ENCODE measurements at regions of chr5 and their contacts with region 1.

Region 1: DNA sequence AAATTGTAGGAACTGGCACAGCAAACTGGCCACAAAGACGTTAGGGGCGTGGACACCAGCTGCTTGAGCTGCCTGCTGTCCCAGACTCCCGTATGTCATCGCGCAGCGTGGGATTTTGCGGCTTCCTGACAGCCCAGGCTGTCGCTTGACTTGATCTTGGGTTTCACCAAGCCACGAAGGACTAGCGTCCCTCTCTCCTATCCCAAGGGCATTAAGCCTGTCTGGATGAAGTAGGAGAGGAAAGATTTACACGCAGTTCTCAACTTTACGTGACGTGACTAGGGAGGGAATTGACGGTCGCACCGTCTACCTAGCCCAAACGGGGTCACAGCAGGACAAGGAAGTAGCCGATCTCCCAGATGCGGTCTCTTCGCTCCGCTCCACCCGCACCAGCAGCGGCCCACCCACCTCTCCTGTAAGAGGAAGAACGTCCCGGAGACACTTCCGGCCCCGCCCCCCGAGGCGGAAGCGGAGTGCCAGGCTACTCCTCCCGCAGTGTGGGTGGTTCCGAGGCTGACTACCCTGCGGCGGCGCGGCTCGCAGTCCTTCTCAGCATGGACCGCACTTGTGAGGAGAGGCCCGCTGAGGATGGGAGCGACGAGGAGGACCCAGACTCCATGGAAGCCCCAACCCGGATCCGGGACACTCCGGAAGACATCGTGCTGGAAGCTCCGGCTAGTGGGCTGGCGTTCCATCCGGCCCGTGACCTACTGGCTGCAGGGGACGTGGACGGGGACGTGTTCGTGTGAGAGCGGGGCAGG is at the start of gene WDR55:
- DNase-seq: peak; percentile 94 to 96
- ATAC-seq: peak; percentile 95
- H3K4me3 ChIP-seq: peak within 1 kb of the TSS; percentile 79 to 90 (median 82)
- H3K27ac ChIP-seq: peak within 1 kb of the TSS; percentile 92 to 98 (median 98)
- H3K4me1 ChIP-seq: peaks cover 16 to 20% of the 10 kb centered on the region in 2 donors
- H3K27me3 ChIP-seq: no peaks in the 10 kb centered on the region
- CTCF ChIP-seq: no peak
- POLR2A ChIP-seq: peak; percentile 76 to 84
- total RNA-seq, gene WDR55: 10.9 to 18.7 (median 15.1) TPM

Region 2: GRCh38 chr5:139611703-139612584 is 1052.6 kb before region 1 on chr5:
- in situ Hi-C with region 1: no loop called
- intact Hi-C with region 1: no loop called
- DNase-seq: no peak
- ATAC-seq: no peak
- H3K4me3 ChIP-seq: no peak overlapping the region
- H3K27ac ChIP-seq: peak overlapping the region in 2 of 4 donors; percentile 18 to 20
- H3K4me1 ChIP-seq: peaks cover 19 to 20% of the 10 kb centered on the region in 2 donors
- H3K27me3 ChIP-seq: no peaks in the 10 kb centered on the region
- CTCF ChIP-seq: no peak
- POLR2A ChIP-seq: no peak

Region 3: DNA sequence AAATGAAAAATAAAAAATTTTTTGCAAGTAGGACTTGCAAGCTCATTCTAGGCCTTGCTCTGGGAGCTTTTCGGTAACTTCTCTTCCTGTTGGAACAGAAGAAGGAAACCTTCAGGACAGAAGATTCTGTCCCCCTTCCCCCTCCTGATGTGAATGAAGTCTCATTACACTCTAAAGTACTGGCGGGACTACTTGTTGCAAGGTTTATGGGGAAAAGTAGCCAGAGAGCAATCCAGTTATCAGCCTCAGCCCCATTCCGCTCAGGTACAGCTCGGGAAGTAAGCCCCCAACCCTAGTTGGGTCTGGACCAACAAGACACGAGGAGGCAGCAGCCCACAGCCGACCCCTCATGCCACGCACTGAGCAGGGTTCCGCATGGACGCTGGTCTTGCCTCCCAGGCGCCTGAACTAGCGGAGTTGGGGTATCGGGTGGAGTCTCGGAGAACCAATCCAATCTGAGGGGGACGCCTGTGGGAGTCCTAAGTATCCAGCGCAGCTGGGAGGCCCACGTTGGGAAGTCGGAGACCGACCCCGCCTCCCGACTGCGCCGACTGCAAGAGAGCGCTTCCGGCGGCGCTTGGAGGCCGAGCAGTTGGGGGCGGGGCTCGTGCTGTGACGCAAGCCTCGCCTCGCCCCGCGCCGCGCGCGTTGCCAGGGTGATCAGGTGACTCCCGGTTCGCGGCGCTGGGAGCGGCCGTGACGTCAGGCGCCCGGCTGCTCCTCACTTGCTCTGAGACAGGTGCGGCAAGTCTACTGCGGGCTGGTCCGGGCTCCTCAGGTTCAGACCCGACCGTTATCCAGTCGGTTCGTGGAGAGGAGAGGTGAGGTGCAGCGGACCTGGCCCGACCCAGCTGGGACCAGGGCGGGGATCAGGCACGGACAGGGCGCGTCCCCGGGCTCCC is 489.8 kb before region 1 on chr5 and contains the start of gene CYSTM1:
- in situ Hi-C with region 1: no loop called
- intact Hi-C with region 1: loop called (anchors 10 kb)
- DNase-seq: peak; percentile 94 to 97
- ATAC-seq: peak; percentile 74 to 76
- H3K4me3 ChIP-seq: peak within 1 kb of the TSS; percentile 87 to 98 (median 88)
- H3K27ac ChIP-seq: peak within 1 kb of the TSS; percentile 97 to 99 (median 98)
- H3K4me1 ChIP-seq: peaks cover 35 to 37% of the 10 kb centered on the region in 2 donors
- H3K27me3 ChIP-seq: no peaks in the 10 kb centered on the region
- CTCF ChIP-seq: peak in 1 of 5 experiments; percentile 40
- POLR2A ChIP-seq: peak; percentile 98 to 99
- total RNA-seq, gene CYSTM1: 304 to 593 (median 336) TPM

Region 4: DNA sequence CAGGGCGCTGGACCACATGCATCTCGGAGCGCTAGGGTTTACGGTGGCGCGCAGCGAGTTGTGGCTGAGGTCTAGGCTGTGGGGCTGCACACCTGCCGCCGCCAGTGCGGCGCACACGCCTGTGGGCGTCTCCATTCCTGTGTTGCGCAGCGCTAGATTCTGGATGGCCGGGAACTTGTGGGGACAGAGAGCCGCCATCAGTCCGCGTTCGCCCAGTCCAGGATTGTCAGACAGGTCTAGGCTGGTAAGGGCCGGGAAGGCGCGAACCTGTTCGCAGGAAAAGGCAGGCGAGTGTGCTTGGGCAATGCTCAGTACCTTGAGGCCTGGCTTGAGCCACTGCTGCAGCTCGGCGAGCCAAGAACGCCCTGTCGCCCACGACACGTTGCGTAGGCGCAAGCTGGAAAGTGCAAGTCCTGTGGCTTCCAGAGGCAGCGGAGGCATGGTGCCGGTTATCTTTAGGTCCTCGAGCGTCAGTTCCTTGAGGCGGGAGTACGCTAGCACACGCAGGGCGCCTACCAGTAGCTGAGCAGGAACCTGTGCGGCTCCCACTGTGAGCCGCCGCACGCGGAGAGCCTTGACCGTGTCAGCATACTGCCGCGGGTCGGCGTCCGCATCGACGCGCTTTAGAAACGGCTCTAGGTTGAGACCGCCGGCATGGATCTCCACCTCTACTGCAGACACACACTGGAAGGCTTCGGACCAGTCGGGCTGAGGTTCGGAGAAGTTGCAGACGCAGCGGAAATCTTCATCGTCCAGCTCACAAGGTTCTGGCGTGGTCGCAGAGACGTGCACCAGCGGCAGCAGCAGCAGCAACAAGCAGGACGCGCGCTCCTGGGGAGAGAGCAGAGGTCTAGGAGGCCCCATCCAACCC is 32.2 kb before region 1 on chr5:
- in situ Hi-C with region 1: no loop called
- intact Hi-C with region 1: no loop called
- DNase-seq: peak; percentile 24 to 66
- ATAC-seq: peak; percentile 75 to 76
- H3K4me3 ChIP-seq: peak overlapping the region; percentile 55 to 67 (median 60)
- H3K27ac ChIP-seq: peak overlapping the region; percentile 70 to 78 (median 75)
- H3K4me1 ChIP-seq: peaks cover 8 to 13% of the 10 kb centered on the region in 2 donors
- H3K27me3 ChIP-seq: no peaks in the 10 kb centered on the region
- CTCF ChIP-seq: no peak
- POLR2A ChIP-seq: peak; percentile 15 to 47

Region 5: DNA sequence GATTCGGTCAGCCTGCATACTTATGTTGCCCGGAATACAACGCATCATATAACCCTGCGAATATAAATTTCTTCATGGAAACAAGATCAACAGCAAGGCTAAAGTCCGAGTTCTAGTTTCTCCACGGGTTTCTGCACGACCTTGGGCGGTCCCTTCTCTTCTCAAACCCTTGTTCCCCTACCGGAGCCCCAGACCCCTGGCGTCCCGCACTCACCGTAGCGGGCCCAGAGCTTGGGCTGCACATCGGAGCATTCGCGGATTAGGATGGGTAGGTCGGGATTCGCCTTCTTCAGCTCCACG is 17.5 kb before region 1 on chr5:
- in situ Hi-C with region 1: no loop called
- intact Hi-C with region 1: loop called (anchors 1 kb)
- DNase-seq: no peak
- ATAC-seq: peak; percentile 6 to 27
- H3K4me3 ChIP-seq: peak overlapping the region; percentile 81 to 96 (median 90)
- H3K27ac ChIP-seq: peak overlapping the region; percentile 85 to 94 (median 92)
- H3K4me1 ChIP-seq: peaks cover 19 to 20% of the 10 kb centered on the region in 2 donors
- H3K27me3 ChIP-seq: no peaks in the 10 kb centered on the region
- CTCF ChIP-seq: no peak
- POLR2A ChIP-seq: no peak

Region 6: DNA sequence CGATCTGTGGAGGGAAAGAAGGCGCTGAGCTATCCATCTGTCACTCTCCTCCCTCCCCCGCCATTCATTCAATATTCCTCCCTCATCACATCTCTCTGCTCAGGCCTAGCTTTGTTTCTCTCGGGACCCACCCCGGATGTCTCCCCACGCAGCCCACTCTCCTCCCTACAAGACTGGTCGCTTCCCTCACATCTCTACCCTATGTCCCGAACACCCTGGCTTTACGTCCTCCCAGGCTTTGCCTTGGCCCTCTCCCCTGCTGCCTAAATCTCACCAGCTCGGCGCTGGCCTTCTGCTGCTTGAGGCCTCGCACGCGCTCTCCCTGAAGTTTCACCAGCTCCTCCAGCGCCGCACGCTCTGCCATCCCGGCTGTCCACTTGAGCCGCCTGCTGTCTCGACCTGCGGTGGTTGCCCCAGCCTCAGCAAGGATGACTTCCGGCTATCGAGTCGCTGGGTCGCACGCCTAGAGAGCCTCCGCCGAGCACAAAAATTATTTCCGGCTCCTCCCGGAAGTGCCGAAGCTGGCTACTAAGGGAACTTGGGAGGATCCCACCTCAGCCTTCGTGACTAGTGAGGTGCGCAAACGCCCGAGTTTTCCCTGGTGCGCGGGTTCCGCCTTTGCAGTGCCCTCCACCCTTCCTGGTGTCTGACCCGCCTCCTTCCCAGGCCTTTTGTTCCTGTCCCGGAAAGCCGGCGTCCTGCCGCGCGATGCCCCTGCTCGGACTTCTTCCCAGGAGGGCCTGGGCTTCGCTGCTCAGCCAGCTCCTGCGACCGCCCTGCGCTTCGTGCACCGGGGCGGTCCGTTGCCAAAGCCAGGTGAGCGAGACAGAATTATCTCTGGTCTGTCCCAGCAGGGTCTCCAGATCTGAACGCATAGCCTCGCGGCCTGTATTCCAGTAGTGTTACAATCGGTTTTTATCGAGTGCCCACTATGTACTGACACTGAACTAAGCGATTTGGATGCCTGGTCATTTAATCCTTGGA is 26.7 kb after region 1 on chr5 and contains the starts of genes HARS1 and HARS2:
- in situ Hi-C with region 1: no loop called
- intact Hi-C with region 1: loop called (anchors 1 kb)
- DNase-seq: peak; percentile 87 to 90
- ATAC-seq: peak; percentile 97 to 98
- H3K4me3 ChIP-seq: peak within 1 kb of the TSS; percentile 88 to 96 (median 90)
- H3K27ac ChIP-seq: peak within 1 kb of the TSS; percentile 85 to 93 (median 90)
- H3K4me1 ChIP-seq: peaks cover 18 to 40% of the 10 kb centered on the region in 2 donors
- H3K27me3 ChIP-seq: no peaks in the 10 kb centered on the region
- CTCF ChIP-seq: no peak
- POLR2A ChIP-seq: peak; percentile 38 to 78
- total RNA-seq, gene HARS1: 38.2 to 72.9 (median 59.4) TPM
- total RNA-seq, gene HARS2: 25.2 to 36.0 (median 27.0) TPM

Region 7: GRCh38 chr5:140710899-140711552 is 46.5 kb after region 1 on chr5:
- in situ Hi-C with region 1: no loop called
- intact Hi-C with region 1: loop called (anchors 2 kb)
- DNase-seq: peak; percentile 79 to 88
- ATAC-seq: peak; percentile 92 to 95
- H3K4me3 ChIP-seq: peak overlapping the region; percentile 57 to 66 (median 62)
- H3K27ac ChIP-seq: peak overlapping the region; percentile 82 to 91 (median 86)
- H3K4me1 ChIP-seq: peaks cover 0 to 13% of the 10 kb centered on the region in 2 donors
- H3K27me3 ChIP-seq: no peaks in the 10 kb centered on the region
- CTCF ChIP-seq: no peak
- POLR2A ChIP-seq: peak; percentile 56 to 63

Measured in gastrocnemius medialis (tissue), 4 donors.